A673 (cell line): ENCODE measurements at regions of chrX and their contacts with region 1.

Region 1: GRCh38 chrX:70354716-70355115 is 64.8 kb downstream of the KIF4A start:
- DNase-seq: no peak
- H3K4me3 ChIP-seq: no peak overlapping the region
- H3K27ac ChIP-seq: no peak overlapping the region
- H3K4me1 ChIP-seq: no peaks in the 10 kb centered on the region
- H3K27me3 ChIP-seq: no peaks in the 10 kb centered on the region
- CTCF ChIP-seq: no peak

Region 2: DNA sequence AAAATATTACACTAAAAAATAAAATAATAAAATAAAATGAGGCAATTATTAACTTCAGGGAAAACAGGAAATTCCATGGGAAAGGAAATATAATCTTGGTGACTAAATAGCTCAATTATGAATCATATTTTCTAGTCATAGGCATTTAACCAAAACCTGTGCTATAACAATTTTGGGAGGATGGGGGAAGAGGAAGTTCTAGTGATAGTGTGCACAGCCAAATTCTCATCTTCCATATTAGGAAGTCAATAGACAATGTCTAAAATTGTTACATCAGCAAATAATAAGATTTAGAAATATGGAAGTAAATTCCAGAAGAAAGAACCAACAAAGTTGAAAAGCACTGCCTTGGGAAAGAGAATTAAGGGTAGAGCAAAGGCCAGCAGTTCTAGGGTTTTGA is 307.7 kb before region 1 on chrX:
- CTCF ChIA-PET with region 1: no interaction called
- POLR2A ChIA-PET with region 1: no interaction called
- intact Hi-C with region 1: no loop called
- DNase-seq: no peak
- H3K4me3 ChIP-seq: no peak overlapping the region
- H3K27ac ChIP-seq: no peak overlapping the region
- H3K4me1 ChIP-seq: no peaks in the 10 kb centered on the region
- H3K27me3 ChIP-seq: no peaks in the 10 kb centered on the region
- CTCF ChIP-seq: no peak

Region 3: GRCh38 chrX:70494441-70494840 is 139.7 kb after region 1 on chrX:
- CTCF ChIA-PET with region 1: no interaction called
- POLR2A ChIA-PET with region 1: no interaction called
- intact Hi-C with region 1: no loop called
- DNase-seq: no peak
- H3K4me3 ChIP-seq: no peak overlapping the region
- H3K27ac ChIP-seq: no peak overlapping the region
- H3K4me1 ChIP-seq: no peaks in the 10 kb centered on the region
- H3K27me3 ChIP-seq: no peaks in the 10 kb centered on the region
- CTCF ChIP-seq: no peak

Region 4: GRCh38 chrX:70508296-70508911 is 153.7 kb after region 1 on chrX:
- CTCF ChIA-PET with region 1: no interaction called
- POLR2A ChIA-PET with region 1: no interaction called
- intact Hi-C with region 1: loop called (anchors 5 kb)
- DNase-seq: peak; percentile 23
- H3K4me3 ChIP-seq: no peak overlapping the region
- H3K27ac ChIP-seq: no peak overlapping the region
- H3K4me1 ChIP-seq: peaks cover 7% of the 10 kb centered on the region
- H3K27me3 ChIP-seq: no peaks in the 10 kb centered on the region
- CTCF ChIP-seq: no peak

Region 5: GRCh38 chrX:70605352-70605751 is 250.6 kb after region 1 on chrX:
- CTCF ChIA-PET with region 1: no interaction called
- POLR2A ChIA-PET with region 1: no interaction called
- intact Hi-C with region 1: no loop called
- DNase-seq: no peak
- H3K4me3 ChIP-seq: no peak overlapping the region
- H3K27ac ChIP-seq: no peak overlapping the region
- H3K4me1 ChIP-seq: no peaks in the 10 kb centered on the region
- H3K27me3 ChIP-seq: peaks cover under 1% of the 10 kb centered on the region
- CTCF ChIP-seq: no peak